Testis (tissue), 5 donors: ENCODE measurements at regions of chr9 and their contacts with region 1.

Region 1: GRCh38 chr9:29945012-29945411 is 2371.7 kb upstream of the C9orf72 start:
- DNase-seq: no peak
- H3K4me3 ChIP-seq: no peak overlapping the region
- H3K27ac ChIP-seq: no peak overlapping the region
- H3K4me1 ChIP-seq: no peaks in the 10 kb centered on the region
- H3K27me3 ChIP-seq: no peaks in the 10 kb centered on the region
- CTCF ChIP-seq: no peak
- POLR2A ChIP-seq: no peak

Region 2: DNA sequence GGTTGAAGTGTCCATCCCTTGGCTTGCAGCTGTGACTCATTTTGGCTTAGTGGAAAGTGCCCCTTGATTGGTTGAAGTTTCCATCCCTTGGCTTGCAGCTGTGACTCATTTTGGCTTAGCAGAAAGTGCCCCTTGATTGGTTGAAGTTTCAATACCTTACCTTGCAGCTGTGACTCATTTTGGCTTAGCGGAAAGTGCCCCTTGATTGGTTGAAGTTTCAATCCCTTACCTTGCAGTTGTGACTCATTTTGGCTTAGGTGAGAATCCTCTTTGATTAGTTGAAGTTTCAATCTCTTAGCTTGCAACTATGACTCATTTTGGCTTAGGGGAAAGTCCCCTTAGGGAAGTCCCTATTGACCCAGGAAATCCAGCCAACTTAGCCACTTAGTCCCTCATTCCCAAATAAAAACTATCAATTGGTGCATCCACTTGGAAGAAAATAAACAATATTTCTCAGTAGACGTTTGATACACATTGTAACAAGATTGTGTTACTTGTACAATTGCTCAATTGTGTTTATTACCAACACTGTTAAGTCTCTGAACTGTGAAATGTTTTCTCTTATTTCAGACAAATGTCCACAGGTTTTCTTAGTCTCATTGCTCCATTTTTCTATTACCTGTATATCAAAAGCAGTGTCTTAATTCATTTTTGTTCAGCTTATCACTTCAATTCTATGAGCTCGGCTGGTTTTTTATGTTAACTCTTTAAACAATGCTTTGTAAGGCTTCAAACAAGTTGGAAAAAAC is 130.6 kb after region 1 on chr9:
- intact Hi-C with region 1: no loop called
- DNase-seq: no peak
- H3K4me3 ChIP-seq: no peak overlapping the region
- H3K27ac ChIP-seq: no peak overlapping the region
- H3K4me1 ChIP-seq: no peaks in the 10 kb centered on the region
- H3K27me3 ChIP-seq: no peaks in the 10 kb centered on the region
- CTCF ChIP-seq: no peak
- POLR2A ChIP-seq: no peak

Region 3: GRCh38 chr9:30280229-30280900 is 335.4 kb after region 1 on chr9:
- intact Hi-C with region 1: no loop called
- DNase-seq: no peak
- H3K4me3 ChIP-seq: no peak overlapping the region
- H3K27ac ChIP-seq: no peak overlapping the region
- H3K4me1 ChIP-seq: no peaks in the 10 kb centered on the region
- H3K27me3 ChIP-seq: no peaks in the 10 kb centered on the region
- CTCF ChIP-seq: no peak
- POLR2A ChIP-seq: no peak

Region 4: DNA sequence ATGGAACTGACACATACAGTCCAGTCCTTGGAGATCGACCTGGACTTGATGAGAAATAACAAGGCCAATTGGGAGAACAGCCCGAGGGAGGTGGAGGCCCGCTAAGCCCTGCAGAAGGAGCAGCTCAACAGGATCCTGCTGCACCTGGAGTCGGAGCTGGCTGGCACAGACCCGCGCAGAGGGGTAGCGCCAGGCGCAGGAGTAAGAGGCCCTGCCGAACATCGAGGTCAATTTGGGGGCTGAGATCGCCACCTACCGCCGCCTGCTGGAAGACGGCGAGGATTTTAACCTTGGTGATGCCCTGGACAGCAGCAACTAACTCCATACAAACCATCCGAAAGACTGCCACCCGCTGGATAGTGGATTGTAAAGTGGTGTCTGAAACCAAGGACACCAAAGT is 829.3 kb after region 1 on chr9:
- intact Hi-C with region 1: loop called (anchors 5 kb)
- DNase-seq: peak; percentile 22
- H3K4me3 ChIP-seq: peak overlapping the region in 1 of 2 donors; percentile 11
- H3K27ac ChIP-seq: no peak overlapping the region
- H3K4me1 ChIP-seq: no peaks in the 10 kb centered on the region
- H3K27me3 ChIP-seq: no peaks in the 10 kb centered on the region
- CTCF ChIP-seq: peak in 1 of 3 experiments; percentile 16
- POLR2A ChIP-seq: no peak